Activated CD4-positive, alpha-beta T cell treated with anti-CD3 and anti-CD28 coated beads, Interleukin-2, amount 10 ng/mL, durations not matched to agents 7 days and 5 days (primary cell): ENCODE measurements at regions of chr14 and their contacts with region 1.

Region 1: DNA sequence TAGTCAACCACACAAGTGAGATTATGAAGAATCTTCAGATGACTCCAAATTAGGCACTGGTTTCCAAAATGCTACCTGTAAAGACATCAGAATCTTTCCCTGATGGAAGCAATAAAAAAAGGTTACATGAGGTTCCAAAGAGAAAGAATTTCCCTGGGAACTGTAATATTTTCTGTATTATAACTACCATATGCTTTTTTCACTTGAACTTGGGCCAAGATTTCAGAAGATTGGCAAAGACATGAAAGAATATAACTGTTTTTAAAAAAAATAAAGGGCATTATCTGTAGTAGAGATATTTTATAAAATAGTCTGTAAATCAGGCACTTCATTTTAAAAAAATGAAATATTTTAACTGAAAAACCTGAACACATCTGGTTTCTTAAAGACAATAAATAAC is 12.9 kb downstream of the HECTD1 start:
- DNase-seq: no peak
- H3K4me3 Mint-ChIP-seq: no peak overlapping the region
- H3K27ac Mint-ChIP-seq: no peak overlapping the region
- H3K4me1 Mint-ChIP-seq: peaks cover 37% of the 10 kb centered on the region
- H3K27me3 Mint-ChIP-seq: no peaks in the 10 kb centered on the region

Region 2: DNA sequence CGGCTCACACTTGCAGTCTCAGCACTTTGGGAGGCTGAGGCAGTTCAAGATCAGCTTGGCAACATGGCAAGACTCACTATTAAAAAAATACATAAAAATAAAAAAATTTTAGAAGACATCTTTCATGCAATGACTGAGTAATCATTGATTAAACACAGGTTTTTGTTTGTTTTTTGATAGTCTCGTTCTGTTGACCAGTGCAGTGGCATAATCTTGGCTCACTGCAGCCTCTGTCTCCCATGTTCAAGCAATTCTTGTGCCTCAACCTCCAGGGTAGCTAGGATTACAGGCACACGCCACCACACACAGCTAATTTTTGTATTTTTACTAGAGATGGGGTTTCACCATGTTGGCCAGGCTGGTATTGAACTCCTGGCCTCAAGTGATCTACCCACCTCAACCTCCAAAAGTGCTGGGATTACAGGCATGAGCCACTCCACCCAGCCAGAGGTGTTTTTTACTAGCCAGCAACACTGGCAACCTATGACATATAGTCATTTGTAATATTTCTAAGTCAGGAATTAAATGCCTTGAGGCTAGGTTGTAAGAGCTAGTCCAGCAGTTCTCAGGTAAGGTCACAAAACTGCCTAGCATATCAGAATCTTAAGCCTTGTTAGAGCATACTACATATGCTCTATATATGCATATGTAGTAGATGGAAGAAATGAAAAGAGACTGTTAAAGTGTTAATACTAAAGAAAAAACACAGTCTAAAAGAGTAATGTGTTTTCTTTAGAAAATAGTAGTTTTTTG is 14.2 kb before region 1 on chr14:
- CTCF ChIA-PET with region 1: no interaction called
- POLR2A ChIA-PET with region 1: no interaction called
- DNase-seq: no peak
- H3K4me3 Mint-ChIP-seq: no peak overlapping the region
- H3K27ac Mint-ChIP-seq: no peak overlapping the region
- H3K4me1 Mint-ChIP-seq: no peaks in the 10 kb centered on the region
- H3K27me3 Mint-ChIP-seq: no peaks in the 10 kb centered on the region

Region 3: GRCh38 chr14:31207755-31208545 is 13.3 kb after region 1 on chr14 and contains the start of gene HECTD1:
- CTCF ChIA-PET with region 1: interaction called, 19 read pairs
- POLR2A ChIA-PET with region 1: no interaction called
- DNase-seq: peak; percentile 85
- H3K4me3 Mint-ChIP-seq: peak within 1 kb of the TSS; percentile 90
- H3K27ac Mint-ChIP-seq: peak within 1 kb of the TSS; percentile 100
- H3K4me1 Mint-ChIP-seq: peaks cover 53% of the 10 kb centered on the region
- H3K27me3 Mint-ChIP-seq: peaks cover 2% of the 10 kb centered on the region
- total RNA-seq, gene HECTD1: 97.2 to 110 TPM

Region 4: DNA sequence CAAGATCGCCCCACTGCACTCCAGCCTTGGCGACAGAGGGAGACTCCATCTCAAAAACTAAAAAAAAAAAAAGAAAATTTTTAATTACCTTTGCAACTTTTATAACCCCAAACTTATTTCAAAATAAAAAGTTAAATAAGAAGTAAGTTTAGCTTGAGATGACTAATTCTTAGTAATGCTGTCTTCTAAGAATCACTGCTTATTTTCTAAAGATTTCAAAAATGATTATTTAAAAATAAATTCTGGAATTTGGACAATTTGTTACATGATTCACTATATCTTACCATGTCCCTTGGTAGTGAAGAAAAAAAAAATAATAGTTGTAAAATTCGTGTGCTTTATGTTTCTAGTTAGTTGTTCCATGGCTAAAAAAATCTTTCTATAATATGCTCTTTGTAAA is 24.5 kb after region 1 on chr14:
- CTCF ChIA-PET with region 1: no interaction called
- POLR2A ChIA-PET with region 1: no interaction called
- DNase-seq: no peak
- H3K4me3 Mint-ChIP-seq: no peak overlapping the region
- H3K27ac Mint-ChIP-seq: no peak overlapping the region
- H3K4me1 Mint-ChIP-seq: no peaks in the 10 kb centered on the region
- H3K27me3 Mint-ChIP-seq: no peaks in the 10 kb centered on the region